ENCODE measurements at regions of chr2 and their contacts with region 1.

Region 1: GRCh38 chr2:135913727-135914365 is 37.6 kb upstream of the MCM6 start:
- DNase-seq: peak; percentile 73
- H3K4me3 ChIP-seq: no peak overlapping the region
- H3K27ac ChIP-seq: peak overlapping the region; percentile 5
- H3K4me1 ChIP-seq: peaks cover 27% of the 10 kb centered on the region
- CTCF ChIP-seq: peak; percentile 96

Region 2: DNA sequence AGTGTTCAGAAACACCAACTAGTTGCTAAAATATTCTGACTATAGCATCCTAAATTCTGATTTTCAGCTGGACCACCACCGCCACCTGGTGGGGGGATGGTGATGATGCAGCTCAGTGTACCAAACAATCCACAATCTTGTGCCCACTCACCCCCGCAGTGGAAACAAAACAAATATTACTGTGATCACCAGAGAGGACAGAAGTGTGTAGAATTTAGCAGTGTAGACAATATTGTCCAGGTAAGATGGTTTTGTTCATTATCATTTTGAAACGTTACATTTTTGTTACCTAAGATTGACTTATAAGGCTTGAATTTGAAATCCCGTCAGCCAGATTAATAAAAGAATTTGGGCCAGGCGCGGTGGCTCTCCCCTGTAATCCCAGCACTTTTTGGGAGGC is 203.9 kb before region 1 on chr2:
- CTCF ChIA-PET with region 1: no interaction called
- POLR2A ChIA-PET with region 1: no interaction called
- intact Hi-C with region 1: no loop called
- DNase-seq: peak; percentile 61
- H3K4me3 ChIP-seq: no peak overlapping the region
- H3K27ac ChIP-seq: no peak overlapping the region
- H3K4me1 ChIP-seq: no peaks in the 10 kb centered on the region
- CTCF ChIP-seq: peak; percentile 99

Region 3: DNA sequence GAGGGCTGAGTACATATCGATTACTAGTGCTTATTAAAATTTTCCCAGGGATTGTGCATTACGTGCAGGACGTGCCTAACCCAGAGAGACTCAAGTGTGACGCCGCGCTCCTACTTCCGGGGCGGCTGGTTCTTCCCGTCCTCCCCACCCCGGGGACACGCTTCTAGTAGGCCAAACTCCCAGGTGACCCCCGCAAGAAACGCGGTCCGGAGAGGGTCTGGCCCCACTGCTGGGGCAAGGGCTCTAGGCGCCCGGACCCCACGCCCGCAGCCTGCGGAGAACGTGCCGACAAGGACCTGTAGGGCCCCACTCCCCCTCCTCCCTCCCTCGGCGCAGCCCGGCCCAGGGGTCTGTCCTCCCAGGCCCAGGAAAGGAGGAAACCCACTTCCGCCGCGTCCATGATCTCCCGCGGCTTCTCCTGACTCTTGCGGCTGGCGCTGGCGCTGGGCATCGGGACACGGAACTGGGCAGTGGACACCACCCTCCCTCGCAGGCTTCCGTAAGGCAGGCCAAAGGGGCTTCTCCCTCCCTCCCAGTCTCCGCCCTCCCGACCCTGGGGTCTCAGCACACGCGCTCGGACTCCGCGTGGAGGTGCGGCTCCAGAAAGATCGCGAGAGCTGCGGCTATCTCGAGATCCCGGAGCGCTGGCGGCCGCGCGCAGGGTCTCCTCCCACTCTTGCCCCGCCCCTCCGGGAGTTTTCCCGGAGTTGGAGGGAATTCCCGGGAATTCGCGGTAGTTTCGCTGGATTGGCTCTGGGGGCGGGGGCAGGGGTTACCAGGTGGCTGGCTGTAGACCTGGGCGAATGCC is 71.4 kb after region 1 on chr2 and contains the start of gene DARS1:
- CTCF ChIA-PET with region 1: no interaction called
- POLR2A ChIA-PET with region 1: no interaction called
- intact Hi-C with region 1: loop called (anchors 5 kb)
- DNase-seq: peak; percentile 93
- H3K4me3 ChIP-seq: peak within 1 kb of the TSS; percentile 85
- H3K27ac ChIP-seq: peak within 1 kb of the TSS; percentile 79
- H3K4me1 ChIP-seq: peaks cover 49% of the 10 kb centered on the region
- CTCF ChIP-seq: no peak
- total RNA-seq, gene DARS1: 90.5 and 108 TPM in 2 replicates

Region 4: DNA sequence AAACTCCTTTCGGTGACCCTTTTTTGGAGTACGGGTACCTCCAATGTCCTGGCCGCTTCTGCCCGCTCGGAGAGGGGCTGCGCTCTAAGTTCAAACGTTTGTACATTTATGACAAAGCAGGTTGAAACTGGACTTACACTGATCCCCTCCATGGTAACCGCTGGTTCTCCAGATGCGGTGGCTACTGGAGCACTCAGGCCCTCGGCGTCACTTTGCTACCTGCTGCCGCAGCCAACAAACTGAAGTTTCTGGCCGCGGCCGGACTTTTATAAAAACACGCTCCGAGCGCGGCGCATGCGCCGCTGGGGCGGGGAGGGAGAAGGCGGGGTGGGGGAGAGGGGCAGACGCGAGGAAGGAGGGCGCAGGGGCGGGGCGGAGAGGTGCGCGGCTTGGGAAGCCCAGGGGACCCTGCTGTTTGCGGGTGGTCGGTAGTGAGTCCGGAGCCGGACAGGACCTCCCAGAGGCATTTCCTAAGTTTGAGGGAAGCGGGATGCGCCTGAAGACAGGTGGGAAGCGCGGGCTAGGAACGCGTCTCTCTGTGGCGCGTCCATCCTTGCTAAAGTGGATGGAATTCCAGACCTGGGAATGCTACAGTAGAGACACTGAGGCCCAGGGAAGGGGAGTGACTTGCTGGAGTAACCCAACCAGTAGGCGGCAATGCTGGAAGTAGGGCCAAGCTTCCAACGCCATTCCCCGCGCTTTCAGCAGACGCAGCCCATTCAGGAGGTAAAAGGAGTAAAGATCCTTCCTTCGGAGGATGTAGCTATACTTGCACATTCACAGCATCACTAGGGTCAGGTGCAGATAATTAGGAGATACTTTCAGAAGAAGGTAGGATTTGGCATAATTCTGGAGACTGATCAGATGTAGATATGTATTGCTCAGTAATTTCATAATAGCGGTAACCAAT is 204.3 kb after region 1 on chr2 and contains the start of gene CXCR4:
- CTCF ChIA-PET with region 1: no interaction called
- POLR2A ChIA-PET with region 1: interaction called, 3 read pairs
- intact Hi-C with region 1: loop called (anchors 2 kb)
- DNase-seq: peak; percentile 89
- H3K4me3 ChIP-seq: peak within 1 kb of the TSS; percentile 92
- H3K27ac ChIP-seq: peak within 1 kb of the TSS; percentile 92
- H3K4me1 ChIP-seq: peaks cover 66% of the 10 kb centered on the region
- CTCF ChIP-seq: peak; percentile 33; the same call in 1 of the 2 replicates
- total RNA-seq, gene CXCR4: 367 and 432 TPM in 2 replicates

Region 5: DNA sequence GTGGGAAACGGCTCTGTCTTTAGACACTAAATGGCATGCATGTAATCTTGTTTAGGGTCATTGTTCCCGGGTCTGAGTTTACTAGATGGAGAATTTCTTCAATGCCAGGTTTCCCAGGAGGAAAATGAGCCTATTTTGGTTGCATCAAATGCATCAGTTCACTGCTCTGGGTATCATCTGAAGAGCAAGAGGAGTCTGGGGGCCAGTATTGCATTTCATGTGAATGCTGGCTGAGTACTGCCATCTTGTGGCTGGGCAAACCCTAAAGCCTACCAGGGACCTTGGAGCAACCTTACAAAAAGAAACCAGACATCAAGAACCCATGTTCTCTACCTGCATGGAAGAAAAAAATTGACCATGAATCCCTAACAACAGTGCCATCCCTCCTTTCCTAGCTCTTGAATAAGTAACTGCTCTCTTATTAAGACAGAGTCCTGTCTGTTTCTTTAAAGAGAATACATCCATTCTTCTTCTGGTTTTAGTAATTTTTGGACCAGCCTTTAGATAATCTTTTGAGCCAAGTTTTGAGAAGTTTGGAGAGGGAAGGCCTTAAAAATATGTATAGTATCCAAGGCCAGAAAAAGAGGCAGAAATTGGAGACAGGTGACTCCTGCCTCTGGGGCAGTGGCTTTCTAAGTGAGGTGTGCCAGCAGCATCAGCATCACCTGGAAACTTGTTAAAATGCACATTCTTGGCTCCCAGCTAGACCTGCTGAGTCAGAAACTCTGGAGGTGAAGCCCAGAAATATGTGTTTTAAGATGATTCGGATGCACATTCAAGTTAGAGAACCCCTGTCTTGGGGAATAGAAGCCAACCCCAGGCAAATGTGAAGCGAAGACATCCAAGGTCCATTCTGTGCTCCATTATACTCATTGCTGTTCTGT is 465.1 kb after region 1 on chr2:
- CTCF ChIA-PET with region 1: interaction called, 4 read pairs
- POLR2A ChIA-PET with region 1: interaction called, 18 read pairs
- intact Hi-C with region 1: loop called (anchors 1 kb)
- DNase-seq: peak; percentile 91
- H3K4me3 ChIP-seq: no peak overlapping the region
- H3K27ac ChIP-seq: peak overlapping the region; percentile 48
- H3K4me1 ChIP-seq: peaks cover 90% of the 10 kb centered on the region
- CTCF ChIP-seq: peak; percentile 99

Region 6: GRCh38 chr2:136738044-136738443 is 824.2 kb after region 1 on chr2:
- CTCF ChIA-PET with region 1: no interaction called
- POLR2A ChIA-PET with region 1: no interaction called
- intact Hi-C with region 1: loop called (anchors 10 kb)
- DNase-seq: no peak
- H3K4me3 ChIP-seq: no peak overlapping the region
- H3K27ac ChIP-seq: no peak overlapping the region
- H3K4me1 ChIP-seq: no peaks in the 10 kb centered on the region
- CTCF ChIP-seq: no peak